Aorta (tissue), 5 donors: ENCODE measurements at regions of chr2 and their contacts with region 1.

Region 1: GRCh38 chr2:102806250-102806837 is 44.5 kb downstream of the TMEM182 start:
- DNase-seq: peak; percentile 54 to 78
- ATAC-seq: peak; percentile 78
- H3K4me3 ChIP-seq: no peak overlapping the region
- H3K27ac ChIP-seq: no peak overlapping the region
- H3K4me1 ChIP-seq: no peaks in the 10 kb centered on the region
- H3K27me3 ChIP-seq: no peaks in the 10 kb centered on the region

Region 2: DNA sequence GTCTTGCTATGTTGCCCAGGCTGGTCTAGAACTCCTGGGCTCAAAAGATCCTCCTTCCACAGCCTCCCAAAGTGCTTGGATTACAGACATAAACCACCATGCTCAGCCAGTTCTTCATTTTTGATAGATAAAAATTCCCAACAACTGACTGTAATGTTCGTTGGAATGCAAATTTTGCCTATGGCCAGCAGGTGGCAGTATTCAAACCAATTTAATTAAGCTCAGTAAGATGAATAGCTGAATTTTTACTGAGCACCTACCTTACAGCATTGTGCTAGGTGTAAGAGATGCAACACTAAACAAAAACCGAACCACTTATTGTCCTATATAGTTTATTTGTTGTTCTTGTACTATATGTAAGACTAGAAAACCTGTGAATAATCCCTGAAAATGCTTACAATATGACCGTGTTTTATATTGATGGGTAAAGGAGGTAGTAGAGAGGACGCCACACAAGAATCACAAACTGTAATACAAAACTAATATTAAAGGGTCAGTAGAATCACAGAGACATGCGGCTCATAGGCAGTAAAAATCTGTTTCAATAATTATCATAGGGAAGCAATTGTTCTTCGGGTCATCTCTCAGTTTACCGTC is 52.7 kb before region 1 on chr2:
- intact Hi-C with region 1: loop called (anchors 5 kb)
- DNase-seq: no peak
- ATAC-seq: no peak
- H3K4me3 ChIP-seq: no peak overlapping the region
- H3K27ac ChIP-seq: no peak overlapping the region
- H3K4me1 ChIP-seq: no peaks in the 10 kb centered on the region
- H3K27me3 ChIP-seq: no peaks in the 10 kb centered on the region

Region 3: GRCh38 chr2:102782933-102783332 is 23.4 kb before region 1 on chr2:
- intact Hi-C with region 1: no loop called
- DNase-seq: no peak
- ATAC-seq: no peak
- H3K4me3 ChIP-seq: no peak overlapping the region
- H3K27ac ChIP-seq: no peak overlapping the region
- H3K4me1 ChIP-seq: peaks cover 0 to 2% of the 10 kb centered on the region in 2 donors
- H3K27me3 ChIP-seq: no peaks in the 10 kb centered on the region